ENCODE measurements at regions of chr1 and their contacts with region 1.

Region 1: GRCh38 chr1:212035123-212035834 is at the starts of genes DTL and INTS7:
- DNase-seq: peak; percentile 99
- H3K4me3 Mint-ChIP-seq: peak within 1 kb of the TSS; percentile 95
- H3K27ac Mint-ChIP-seq: peak within 1 kb of the TSS; percentile 85
- H3K4me1 Mint-ChIP-seq: peaks cover 58% of the 10 kb centered on the region
- H3K27me3 Mint-ChIP-seq: no peaks in the 10 kb centered on the region
- total RNA-seq, gene DTL: 73.9 and 77.0 TPM in 2 replicates
- total RNA-seq, gene INTS7: 33.3 and 33.8 TPM in 2 replicates

Region 2: GRCh38 chr1:211698161-211699026 is 336.9 kb before region 1 on chr1:
- intact Hi-C with region 1: loop called (anchors 1 kb)
- DNase-seq: peak; percentile 74
- H3K4me3 Mint-ChIP-seq: no peak overlapping the region
- H3K27ac Mint-ChIP-seq: no peak overlapping the region
- H3K4me1 Mint-ChIP-seq: peaks cover 12% of the 10 kb centered on the region
- H3K27me3 Mint-ChIP-seq: peaks cover 26% of the 10 kb centered on the region

Region 3: DNA sequence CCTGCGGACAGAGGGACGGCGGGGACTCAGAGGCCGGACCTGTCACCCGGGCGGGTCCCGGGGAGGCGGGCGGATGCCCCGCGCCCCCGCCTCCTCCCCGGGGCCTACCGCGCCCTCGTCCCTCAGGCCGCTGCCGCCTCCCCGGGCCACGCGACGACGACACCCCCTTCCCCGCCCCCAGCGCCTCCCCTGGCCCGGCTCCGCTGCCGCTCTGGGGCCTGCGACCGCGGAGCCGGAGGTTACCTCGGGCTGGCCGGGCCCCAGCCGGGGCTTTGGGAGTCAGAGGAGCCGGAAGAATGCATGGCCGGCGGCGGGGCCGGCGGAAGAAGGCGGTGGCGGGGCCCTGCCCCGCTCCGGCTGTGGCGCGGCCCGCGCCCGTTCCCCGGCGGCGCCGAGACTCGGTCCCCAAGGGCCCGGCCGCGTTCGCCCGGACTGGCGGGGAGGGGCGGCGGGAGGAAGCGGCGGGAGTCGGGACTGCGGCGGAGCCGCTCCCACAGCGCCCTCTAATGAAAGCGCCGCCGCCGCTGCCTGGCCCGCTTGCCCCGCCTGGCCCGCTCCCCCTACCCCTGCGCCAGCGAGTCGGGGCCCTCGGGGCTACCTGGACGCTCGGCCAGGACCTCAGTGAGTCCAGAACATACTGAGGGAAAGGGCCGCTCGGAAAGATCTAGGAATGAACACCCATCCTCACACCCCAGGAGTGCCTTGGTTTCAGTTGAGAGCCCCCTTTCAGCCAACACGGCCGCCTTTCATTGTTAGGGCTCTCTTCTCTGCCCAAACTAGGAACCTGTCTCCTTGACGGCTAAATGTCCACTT is 204.7 kb before region 1 on chr1 and contains the start of gene LPGAT1:
- intact Hi-C with region 1: loop called (anchors 2 kb)
- DNase-seq: peak; percentile 67
- H3K4me3 Mint-ChIP-seq: peak within 1 kb of the TSS; percentile 92
- H3K27ac Mint-ChIP-seq: peak within 1 kb of the TSS; percentile 78
- H3K4me1 Mint-ChIP-seq: peaks cover 55% of the 10 kb centered on the region
- H3K27me3 Mint-ChIP-seq: peaks cover 6% of the 10 kb centered on the region
- total RNA-seq, gene LPGAT1: 27.8 and 31.1 TPM in 2 replicates

Region 4: GRCh38 chr1:211935448-211935970 is 99.8 kb before region 1 on chr1:
- intact Hi-C with region 1: loop called (anchors 1 kb)
- DNase-seq: no peak
- H3K4me3 Mint-ChIP-seq: peak overlapping the region; percentile 3
- H3K27ac Mint-ChIP-seq: peak overlapping the region; percentile 6
- H3K4me1 Mint-ChIP-seq: peaks cover 43% of the 10 kb centered on the region
- H3K27me3 Mint-ChIP-seq: peaks cover 2% of the 10 kb centered on the region

Region 5: GRCh38 chr1:212012034-212012740 is 23.1 kb before region 1 on chr1:
- intact Hi-C with region 1: loop called (anchors 1 kb)
- DNase-seq: peak; percentile 48
- H3K4me3 Mint-ChIP-seq: no peak overlapping the region
- H3K27ac Mint-ChIP-seq: no peak overlapping the region
- H3K4me1 Mint-ChIP-seq: peaks cover 6% of the 10 kb centered on the region
- H3K27me3 Mint-ChIP-seq: no peaks in the 10 kb centered on the region

Region 6: GRCh38 chr1:212432706-212433576 is 397.7 kb after region 1 on chr1 and contains the start of gene NENF:
- intact Hi-C with region 1: no loop called
- DNase-seq: peak; percentile 73
- H3K4me3 Mint-ChIP-seq: peak within 1 kb of the TSS; percentile 76
- H3K27ac Mint-ChIP-seq: peak within 1 kb of the TSS; percentile 24
- H3K4me1 Mint-ChIP-seq: peaks cover 27% of the 10 kb centered on the region
- H3K27me3 Mint-ChIP-seq: peaks cover 3% of the 10 kb centered on the region
- total RNA-seq, gene NENF: 41.6 and 42.5 TPM in 2 replicates